Ascending aorta (tissue), 2 donors: ENCODE measurements at regions of chr17 and their contacts with region 1.

Region 1: DNA sequence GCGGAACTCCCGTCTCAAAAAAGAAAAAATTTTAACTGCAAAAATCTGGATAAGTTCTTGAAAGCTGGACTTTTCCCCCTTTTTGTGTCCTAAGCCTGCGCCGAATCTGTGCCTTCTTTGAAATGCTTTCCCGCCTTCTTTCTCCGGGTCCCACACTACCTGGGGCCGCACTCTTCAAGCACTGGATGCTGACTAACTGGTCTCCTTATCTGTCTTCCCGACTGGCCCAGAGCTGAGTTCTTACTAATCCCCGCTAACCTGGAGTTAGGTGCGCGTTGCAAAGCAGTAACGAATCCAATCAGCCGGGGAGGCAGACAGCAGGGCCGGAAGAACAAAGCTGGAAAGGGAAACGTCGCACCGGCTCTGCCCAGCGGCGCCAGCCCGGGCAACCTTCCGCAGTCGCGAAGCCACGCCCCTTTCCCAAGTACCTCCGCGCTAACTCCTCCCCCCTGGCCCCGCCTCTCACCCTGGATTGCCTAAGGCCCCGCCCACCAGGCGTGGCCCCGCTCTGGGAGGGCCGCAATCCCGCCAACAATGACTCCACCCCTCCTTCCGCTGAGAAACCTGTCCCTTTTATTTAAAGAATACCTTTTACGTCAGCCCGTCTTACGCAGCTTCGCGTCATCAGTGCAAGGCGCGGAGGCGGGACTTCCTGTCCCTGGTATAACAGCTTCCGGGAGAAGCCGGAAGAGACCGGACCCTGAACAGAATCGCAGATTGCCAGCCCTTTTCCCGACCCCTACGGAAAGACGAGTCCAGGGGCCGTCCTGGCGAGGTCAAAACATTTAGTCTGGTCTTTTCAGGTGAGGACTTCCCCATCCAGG is at the start of gene TMUB2:
- DNase-seq: peak; percentile 98 to 99
- H3K4me3 ChIP-seq: peak within 1 kb of the TSS; percentile 75 to 92
- H3K27ac ChIP-seq: peak within 1 kb of the TSS; percentile 96 to 97
- H3K4me1 ChIP-seq: peaks cover 5 to 22% of the 10 kb centered on the region in 2 donors
- H3K27me3 ChIP-seq: no peaks in the 10 kb centered on the region
- CTCF ChIP-seq: no peak
- total RNA-seq, gene TMUB2: 27.9 TPM

Region 2: GRCh38 chr17:44110823-44111633 is 75.5 kb before region 1 on chr17:
- intact Hi-C with region 1: loop called (anchors 2 kb)
- DNase-seq: peak; percentile 92 to 99
- H3K4me3 ChIP-seq: peak overlapping the region; percentile 45 to 68
- H3K27ac ChIP-seq: peak overlapping the region; percentile 81 to 95
- H3K4me1 ChIP-seq: peaks cover 32 to 72% of the 10 kb centered on the region in 2 donors
- H3K27me3 ChIP-seq: no peaks in the 10 kb centered on the region
- CTCF ChIP-seq: no peak

Region 3: GRCh38 chr17:44141717-44142285 is 44.7 kb before region 1 on chr17 and contains the start of gene HROB:
- intact Hi-C with region 1: loop called (anchors 2 kb)
- DNase-seq: peak; percentile 76 to 98
- H3K4me3 ChIP-seq: peak within 1 kb of the TSS; percentile 50 to 76
- H3K27ac ChIP-seq: no peak within 1 kb of the TSS
- H3K4me1 ChIP-seq: peaks cover 0 to 10% of the 10 kb centered on the region in 2 donors
- H3K27me3 ChIP-seq: no peaks in the 10 kb centered on the region
- CTCF ChIP-seq: peak; percentile 90 to 95 (median 93)
- total RNA-seq, gene HROB: not detected

Region 4: DNA sequence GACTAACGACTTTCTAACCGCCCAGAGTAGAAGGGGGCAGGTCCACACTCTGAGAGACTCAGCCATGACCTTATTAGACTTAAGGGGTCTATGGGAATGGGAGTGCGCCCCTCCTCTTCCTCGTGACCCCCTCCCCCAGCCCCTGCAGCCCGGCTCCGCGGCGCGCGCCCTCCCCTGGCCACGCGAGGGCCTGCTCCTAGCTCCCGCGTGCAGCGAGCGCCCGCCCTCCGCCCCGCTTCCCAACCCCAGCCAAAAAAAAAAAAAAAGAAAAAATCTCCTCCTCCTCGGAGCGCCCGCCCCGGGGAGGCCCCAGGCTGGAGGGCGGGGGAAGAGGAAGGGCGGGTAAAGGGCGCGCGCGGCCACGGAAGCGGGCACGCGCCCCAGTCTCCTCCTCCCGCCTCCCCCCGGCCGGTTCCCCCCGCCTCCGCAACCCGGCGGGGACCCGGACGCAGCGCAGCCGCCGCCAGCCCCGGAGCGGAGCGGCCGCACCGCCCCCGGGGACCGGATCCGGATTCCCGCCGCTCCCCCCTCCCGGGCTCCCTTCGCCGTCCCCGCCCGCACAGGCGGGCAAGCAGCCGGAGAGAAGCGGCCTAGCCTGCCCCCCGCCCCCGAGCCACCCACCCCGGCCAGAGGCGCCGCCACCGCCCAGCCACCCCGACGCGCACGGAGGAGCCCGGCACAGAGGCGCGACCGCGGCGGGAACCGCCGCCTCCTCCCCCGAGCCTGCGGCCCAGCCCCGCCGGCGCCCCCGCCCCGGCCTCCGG is 32.0 kb after region 1 on chr17:
- intact Hi-C with region 1: loop called (anchors 1 kb)
- DNase-seq: peak; percentile 45 to 92
- H3K4me3 ChIP-seq: peak overlapping the region; percentile 88 to 95
- H3K27ac ChIP-seq: peak overlapping the region; percentile 91 to 99
- H3K4me1 ChIP-seq: peaks cover 17 to 18% of the 10 kb centered on the region in 2 donors
- H3K27me3 ChIP-seq: no peaks in the 10 kb centered on the region
- CTCF ChIP-seq: peak in 2 of 3 experiments; percentile 79 to 82

Region 5: DNA sequence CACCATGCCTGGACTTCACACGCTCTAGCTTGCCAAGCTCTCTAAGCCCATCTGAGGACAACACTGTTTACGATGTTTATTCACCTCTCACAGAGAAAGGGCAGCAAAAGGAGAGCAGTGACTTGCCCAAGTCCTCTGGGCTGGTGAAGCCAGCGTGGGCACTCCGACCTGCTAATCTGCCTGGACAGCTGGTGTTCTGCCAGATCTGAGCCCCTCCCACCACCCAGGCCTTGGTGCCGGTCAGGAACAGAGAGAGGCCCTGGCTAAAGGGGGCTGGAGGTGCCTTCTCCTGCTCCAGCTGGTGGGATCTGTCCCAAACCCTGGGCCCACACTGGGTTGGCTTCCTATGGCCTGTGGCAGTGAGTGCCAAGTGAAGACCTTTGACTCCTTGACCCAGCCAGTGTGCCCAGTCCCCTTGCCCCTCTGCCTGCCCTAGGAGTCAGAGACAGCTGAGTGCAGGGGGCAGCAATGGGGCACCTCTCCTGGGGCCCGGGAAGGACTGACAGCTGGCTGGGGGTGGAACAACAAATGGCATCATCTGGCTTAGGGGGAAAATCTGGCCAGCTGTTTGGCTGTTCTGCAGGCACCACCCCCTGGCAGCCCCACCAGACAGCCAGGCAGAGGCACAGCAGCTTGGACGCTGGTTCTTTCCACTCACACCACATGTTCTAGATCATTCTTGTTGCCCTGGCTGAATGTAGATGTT is 83.2 kb after region 1 on chr17:
- intact Hi-C with region 1: no loop called
- DNase-seq: no peak
- H3K4me3 ChIP-seq: no peak overlapping the region
- H3K27ac ChIP-seq: no peak overlapping the region
- H3K4me1 ChIP-seq: no peaks in the 10 kb centered on the region
- H3K27me3 ChIP-seq: no peaks in the 10 kb centered on the region
- CTCF ChIP-seq: no peak